Activated naive CD4-positive, alpha-beta T cell treated with anti-CD3 and anti-CD28 coated beads, Interleukin-2, amount 10 ng/mL, durations not matched to agents 7 days and 5 days (primary cell): ENCODE measurements at regions of chr5 and their contacts with region 1.

Region 1: DNA sequence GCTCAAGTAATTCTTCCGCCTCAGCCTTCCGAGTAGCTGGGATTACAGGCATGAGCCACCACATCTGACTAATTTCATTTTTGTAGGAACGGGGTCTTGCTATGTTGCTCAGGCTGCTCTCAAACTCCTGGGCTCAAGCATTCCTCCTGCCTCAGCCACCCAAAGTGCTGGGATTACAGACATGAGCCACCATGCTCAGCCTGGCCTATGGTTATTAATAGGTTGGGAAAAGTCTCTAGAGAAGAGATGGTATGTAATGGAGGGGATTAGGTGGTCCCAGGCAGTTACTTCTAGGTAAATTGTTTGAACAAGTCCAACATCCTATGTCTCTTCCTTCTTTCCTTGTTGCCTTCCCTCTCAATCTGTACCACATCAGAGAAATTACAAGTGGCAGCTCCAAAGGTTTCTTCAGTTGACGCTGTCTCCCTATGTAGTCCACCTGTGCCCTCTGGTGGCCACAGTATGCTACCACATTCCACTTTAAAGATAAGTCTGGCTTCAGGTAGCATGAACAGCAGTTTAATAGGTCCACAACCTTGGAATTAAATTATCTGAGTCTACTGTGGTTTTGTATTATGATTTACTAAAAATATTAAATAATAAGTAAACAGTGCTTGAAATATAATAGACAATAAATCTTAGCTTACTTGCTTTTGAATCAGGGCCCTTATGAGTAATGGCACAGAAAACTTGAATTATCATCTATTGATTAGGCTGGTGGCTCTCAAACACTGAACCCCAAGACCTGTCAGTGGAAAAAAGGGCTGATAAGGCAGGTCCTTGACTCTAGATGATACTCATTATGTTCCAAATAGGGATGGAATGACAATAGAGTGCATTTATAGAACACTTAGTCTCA is 9.7 kb downstream of the TIGD6 start:
- DNase-seq: peak; percentile 76
- H3K4me3 Mint-ChIP-seq: no peak overlapping the region
- H3K27ac Mint-ChIP-seq: no peak overlapping the region
- H3K4me1 Mint-ChIP-seq: no peaks in the 10 kb centered on the region
- H3K27me3 Mint-ChIP-seq: no peaks in the 10 kb centered on the region

Region 2: DNA sequence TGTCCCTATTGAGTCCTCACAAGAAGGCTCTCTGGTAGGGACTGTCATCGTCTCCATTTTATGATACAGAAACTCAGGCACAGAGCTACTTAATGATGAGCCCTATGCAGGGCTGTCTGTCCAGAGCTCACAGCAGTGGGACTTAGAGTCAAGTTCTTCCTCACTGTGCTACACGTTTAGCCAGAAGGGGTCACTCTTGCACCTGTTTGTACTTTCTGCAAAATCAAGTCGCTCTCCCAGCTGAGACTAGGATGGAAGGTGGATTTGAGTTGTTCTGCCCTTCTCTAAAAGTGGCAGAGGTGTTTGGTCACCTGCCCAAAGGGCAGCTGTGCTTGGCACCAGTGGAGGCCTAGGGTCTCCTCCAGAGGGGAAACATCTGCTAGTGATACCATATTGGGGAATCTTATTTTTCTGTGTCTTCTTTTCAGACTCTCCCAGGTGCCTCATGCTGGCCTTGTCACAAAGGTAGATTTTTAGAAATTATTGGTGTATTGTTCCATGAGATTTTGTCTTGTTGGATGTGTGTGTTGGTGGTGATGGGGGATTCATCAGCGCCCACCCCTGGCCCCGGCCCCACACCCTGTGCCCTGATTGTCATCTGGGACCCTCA is 156.4 kb before region 1 on chr5:
- CTCF ChIA-PET with region 1: interaction called, 219 read pairs
- DNase-seq: peak; percentile 77
- H3K4me3 Mint-ChIP-seq: no peak overlapping the region
- H3K27ac Mint-ChIP-seq: no peak overlapping the region
- H3K4me1 Mint-ChIP-seq: no peaks in the 10 kb centered on the region
- H3K27me3 Mint-ChIP-seq: no peaks in the 10 kb centered on the region

Region 3: DNA sequence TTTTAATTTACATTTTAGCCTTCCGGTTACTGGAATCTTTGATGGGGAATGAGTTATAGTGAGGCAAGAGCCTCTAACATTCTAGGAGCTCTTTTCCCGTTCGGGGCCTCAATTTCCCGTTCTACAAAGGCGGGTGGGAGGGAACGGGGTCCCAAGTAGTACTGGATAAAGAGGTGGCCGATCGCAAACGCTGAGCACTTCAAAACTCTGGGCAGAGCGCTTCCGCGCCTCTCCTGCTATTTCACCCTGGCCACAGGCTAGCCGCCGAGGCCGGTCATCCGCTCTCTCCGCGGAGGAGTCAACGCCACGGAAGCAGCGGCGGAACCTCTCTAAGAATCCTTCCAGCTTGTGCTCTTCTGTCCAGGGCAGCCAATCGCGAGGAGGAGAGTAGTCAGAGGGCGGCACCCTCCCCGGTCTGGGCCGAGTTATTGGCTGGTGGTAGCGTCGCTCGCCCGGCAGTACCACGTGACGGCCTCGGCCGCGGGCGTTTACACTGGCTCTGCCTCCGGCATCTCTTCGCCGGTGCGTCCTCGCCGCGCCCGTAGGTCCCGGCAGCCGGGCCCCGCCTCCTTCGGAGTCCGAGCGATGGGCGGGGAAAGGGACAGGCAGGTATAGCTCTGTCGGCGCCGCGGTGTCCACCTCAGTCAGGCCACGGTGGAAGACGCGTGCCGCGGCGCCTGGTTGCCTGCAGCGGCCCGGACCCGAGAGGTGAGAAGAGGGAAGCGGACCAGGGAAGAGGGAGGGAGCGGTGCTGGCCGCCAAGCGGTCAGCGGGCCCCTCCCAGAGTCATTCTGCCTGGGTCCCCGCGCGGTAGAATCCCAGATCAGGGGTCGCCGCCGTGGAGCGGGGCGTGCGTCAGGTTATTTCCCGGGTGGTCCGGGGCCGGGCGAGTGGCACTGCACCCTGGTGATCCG is 30.2 kb before region 1 on chr5 and contains the start of gene SLC26A2:
- CTCF ChIA-PET with region 1: interaction called, 12 read pairs
- DNase-seq: peak; percentile 97
- H3K4me3 Mint-ChIP-seq: peak within 1 kb of the TSS; percentile 80
- H3K27ac Mint-ChIP-seq: peak within 1 kb of the TSS; percentile 95
- H3K4me1 Mint-ChIP-seq: peaks cover 32% of the 10 kb centered on the region
- H3K27me3 Mint-ChIP-seq: no peaks in the 10 kb centered on the region